ENCODE measurements at regions of chr2 and their contacts with region 1.

Region 1: DNA sequence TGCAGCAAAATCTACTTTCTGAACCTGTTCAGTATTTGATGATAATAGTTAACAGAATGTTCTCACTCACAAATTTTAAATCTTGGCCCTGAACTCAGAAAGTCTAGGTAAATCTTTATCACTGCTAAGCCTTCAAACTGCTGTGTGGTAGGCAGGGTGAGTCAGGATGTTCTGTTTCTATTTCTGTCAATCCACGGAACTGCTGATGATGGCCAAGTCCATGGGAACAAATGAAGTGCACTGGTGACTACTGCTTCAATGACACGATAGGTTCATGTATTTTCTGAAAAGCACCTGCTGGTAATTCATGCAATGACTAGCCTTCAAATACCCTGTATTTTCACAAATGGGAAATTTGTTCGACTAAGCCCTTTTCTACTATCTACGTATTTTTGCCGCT is 14.2 kb downstream of the NIFK start:
- DNase-seq: peak; percentile 74
- H3K4me3 Mint-ChIP-seq: peak overlapping the region; percentile 44
- H3K27ac Mint-ChIP-seq: peak overlapping the region; percentile 98
- H3K4me1 Mint-ChIP-seq: peaks cover 47% of the 10 kb centered on the region
- H3K27me3 Mint-ChIP-seq: no peaks in the 10 kb centered on the region

Region 2: GRCh38 chr2:120885320-120885719 is 837.2 kb before region 1 on chr2:
- CTCF ChIA-PET with region 1: no interaction called
- POLR2A ChIA-PET with region 1: no interaction called
- intact Hi-C with region 1: no loop called
- DNase-seq: no peak
- H3K4me3 Mint-ChIP-seq: no peak overlapping the region
- H3K27ac Mint-ChIP-seq: no peak overlapping the region
- H3K4me1 Mint-ChIP-seq: no peaks in the 10 kb centered on the region
- H3K27me3 Mint-ChIP-seq: no peaks in the 10 kb centered on the region

Region 3: GRCh38 chr2:121400201-121400600 is 322.3 kb before region 1 on chr2:
- CTCF ChIA-PET with region 1: interaction called, 11 read pairs
- POLR2A ChIA-PET with region 1: no interaction called
- intact Hi-C with region 1: loop called (anchors 1 kb)
- DNase-seq: no peak
- H3K4me3 Mint-ChIP-seq: no peak overlapping the region
- H3K27ac Mint-ChIP-seq: no peak overlapping the region
- H3K4me1 Mint-ChIP-seq: no peaks in the 10 kb centered on the region
- H3K27me3 Mint-ChIP-seq: no peaks in the 10 kb centered on the region

Region 4: GRCh38 chr2:121596221-121597080 is 126.0 kb before region 1 on chr2:
- CTCF ChIA-PET with region 1: interaction called, 5 read pairs
- POLR2A ChIA-PET with region 1: no interaction called
- intact Hi-C with region 1: loop called (anchors 1 kb)
- DNase-seq: peak; percentile 22
- H3K4me3 Mint-ChIP-seq: peak overlapping the region; percentile 48
- H3K27ac Mint-ChIP-seq: peak overlapping the region; percentile 70
- H3K4me1 Mint-ChIP-seq: peaks cover 43% of the 10 kb centered on the region
- H3K27me3 Mint-ChIP-seq: no peaks in the 10 kb centered on the region

Region 5: GRCh38 chr2:121649596-121650314 is 72.7 kb before region 1 on chr2:
- CTCF ChIA-PET with region 1: interaction called, 3 read pairs
- POLR2A ChIA-PET with region 1: interaction called, 9 read pairs
- intact Hi-C with region 1: loop called (anchors 1 kb)
- DNase-seq: peak; percentile 98
- H3K4me3 Mint-ChIP-seq: peak overlapping the region; percentile 97
- H3K27ac Mint-ChIP-seq: peak overlapping the region; percentile 99
- H3K4me1 Mint-ChIP-seq: peaks cover 58% of the 10 kb centered on the region
- H3K27me3 Mint-ChIP-seq: no peaks in the 10 kb centered on the region

Region 6: GRCh38 chr2:121682396-121683298 is 39.8 kb before region 1 on chr2:
- CTCF ChIA-PET with region 1: no interaction called
- POLR2A ChIA-PET with region 1: no interaction called
- intact Hi-C with region 1: no loop called
- DNase-seq: no peak
- H3K4me3 Mint-ChIP-seq: no peak overlapping the region
- H3K27ac Mint-ChIP-seq: no peak overlapping the region
- H3K4me1 Mint-ChIP-seq: no peaks in the 10 kb centered on the region
- H3K27me3 Mint-ChIP-seq: no peaks in the 10 kb centered on the region

Region 7: GRCh38 chr2:121736462-121737341 is 14.2 kb after region 1 on chr2 and contains the start of gene NIFK:
- CTCF ChIA-PET with region 1: interaction called, 4 read pairs
- POLR2A ChIA-PET with region 1: interaction called, 4 read pairs
- intact Hi-C with region 1: loop called (anchors 2 kb)
- DNase-seq: peak; percentile 100
- H3K4me3 Mint-ChIP-seq: peak within 1 kb of the TSS; percentile 98
- H3K27ac Mint-ChIP-seq: peak within 1 kb of the TSS; percentile 89
- H3K4me1 Mint-ChIP-seq: peaks cover 32% of the 10 kb centered on the region
- H3K27me3 Mint-ChIP-seq: no peaks in the 10 kb centered on the region
- total RNA-seq, gene NIFK: 244 to 252 TPM

Region 8: DNA sequence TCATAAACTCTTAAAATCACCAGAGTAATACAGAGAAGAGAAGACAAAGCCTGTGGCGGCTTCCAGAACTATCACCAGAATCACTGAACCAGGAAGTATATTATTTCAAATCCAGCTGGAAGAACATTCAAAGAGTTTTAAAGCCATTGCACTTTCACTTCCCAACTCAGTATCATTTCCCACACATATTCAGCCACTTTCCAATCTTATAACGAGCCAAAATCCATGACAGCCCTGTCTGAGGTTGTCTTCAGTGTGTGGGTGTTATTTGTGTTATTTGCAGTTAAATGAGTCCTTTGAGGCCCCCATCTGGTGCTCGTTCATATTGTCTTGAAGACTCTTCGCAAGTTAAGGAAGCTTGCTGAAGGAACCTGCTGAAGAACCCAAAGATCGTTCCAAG is 592.8 kb after region 1 on chr2:
- CTCF ChIA-PET with region 1: no interaction called
- POLR2A ChIA-PET with region 1: no interaction called
- intact Hi-C with region 1: no loop called
- DNase-seq: no peak
- H3K4me3 Mint-ChIP-seq: no peak overlapping the region
- H3K27ac Mint-ChIP-seq: no peak overlapping the region
- H3K4me1 Mint-ChIP-seq: no peaks in the 10 kb centered on the region
- H3K27me3 Mint-ChIP-seq: no peaks in the 10 kb centered on the region